GM18951 (cell line): ENCODE measurements at regions of chr1 and their contacts with region 1.

Region 1: GRCh38 chr1:31182352-31182751 is 57.3 kb downstream of the NKAIN1 start:
- POLR2A ChIP-seq: no peak

Region 2: DNA sequence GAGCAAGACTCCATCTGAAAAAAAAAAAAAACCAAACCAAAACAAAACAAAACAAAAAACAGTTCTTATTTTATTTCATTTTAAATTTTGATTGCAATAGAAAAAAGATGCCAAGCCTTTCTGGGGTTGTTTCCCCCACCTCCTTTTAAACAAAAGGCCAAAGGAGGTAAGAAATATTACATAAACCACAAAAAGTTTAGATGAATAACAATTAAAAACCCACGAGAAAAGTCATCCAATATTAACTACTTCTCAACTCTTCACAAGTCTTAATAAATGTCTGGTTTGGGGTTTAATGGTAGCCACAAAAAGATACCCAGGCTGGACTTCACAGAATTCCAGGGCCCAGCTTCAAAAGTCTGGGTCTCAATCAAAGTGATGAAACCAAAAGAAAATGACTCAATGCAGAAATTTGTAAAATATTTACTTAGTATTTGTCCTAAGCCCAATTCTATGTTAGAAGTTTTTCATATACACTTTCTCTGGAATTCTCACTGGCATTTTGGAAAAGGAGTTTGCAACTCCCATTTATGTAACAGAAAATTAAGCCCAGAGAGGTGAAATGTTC is 226.8 kb before region 1 on chr1:
- in situ Hi-C with region 1: no loop called
- POLR2A ChIP-seq: no peak

Region 3: DNA sequence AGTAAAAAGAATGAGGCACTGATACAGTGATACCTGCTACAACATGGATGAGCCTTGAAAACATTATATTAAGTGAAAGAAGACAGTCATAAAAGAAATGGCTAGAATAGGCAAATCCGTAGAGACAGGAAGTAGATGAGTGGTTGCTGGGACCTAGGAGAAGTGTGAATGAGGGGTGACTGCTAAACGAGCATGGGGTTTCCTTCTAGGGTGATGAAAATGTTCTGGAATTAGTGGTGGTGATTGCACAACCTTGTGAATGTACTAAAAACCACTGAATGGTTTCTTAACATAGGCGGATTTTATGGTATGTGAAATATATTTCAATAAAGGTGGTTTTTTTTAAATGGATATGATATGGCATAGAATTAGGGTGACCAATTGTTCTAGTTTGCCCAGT is 218.0 kb after region 1 on chr1:
- in situ Hi-C with region 1: loop called (anchors 10 kb)
- POLR2A ChIP-seq: no peak

Region 4: GRCh38 chr1:31548907-31549808 is 366.8 kb after region 1 on chr1:
- in situ Hi-C with region 1: loop called (anchors 10 kb)
- POLR2A ChIP-seq: peak; percentile 43

Region 5: GRCh38 chr1:31663622-31664452 is 481.5 kb after region 1 on chr1:
- in situ Hi-C with region 1: no loop called
- POLR2A ChIP-seq: no peak